Cardiac septum (tissue), 1 donor: ENCODE measurements at regions of chr14 and their contacts with region 1.

Region 1: DNA sequence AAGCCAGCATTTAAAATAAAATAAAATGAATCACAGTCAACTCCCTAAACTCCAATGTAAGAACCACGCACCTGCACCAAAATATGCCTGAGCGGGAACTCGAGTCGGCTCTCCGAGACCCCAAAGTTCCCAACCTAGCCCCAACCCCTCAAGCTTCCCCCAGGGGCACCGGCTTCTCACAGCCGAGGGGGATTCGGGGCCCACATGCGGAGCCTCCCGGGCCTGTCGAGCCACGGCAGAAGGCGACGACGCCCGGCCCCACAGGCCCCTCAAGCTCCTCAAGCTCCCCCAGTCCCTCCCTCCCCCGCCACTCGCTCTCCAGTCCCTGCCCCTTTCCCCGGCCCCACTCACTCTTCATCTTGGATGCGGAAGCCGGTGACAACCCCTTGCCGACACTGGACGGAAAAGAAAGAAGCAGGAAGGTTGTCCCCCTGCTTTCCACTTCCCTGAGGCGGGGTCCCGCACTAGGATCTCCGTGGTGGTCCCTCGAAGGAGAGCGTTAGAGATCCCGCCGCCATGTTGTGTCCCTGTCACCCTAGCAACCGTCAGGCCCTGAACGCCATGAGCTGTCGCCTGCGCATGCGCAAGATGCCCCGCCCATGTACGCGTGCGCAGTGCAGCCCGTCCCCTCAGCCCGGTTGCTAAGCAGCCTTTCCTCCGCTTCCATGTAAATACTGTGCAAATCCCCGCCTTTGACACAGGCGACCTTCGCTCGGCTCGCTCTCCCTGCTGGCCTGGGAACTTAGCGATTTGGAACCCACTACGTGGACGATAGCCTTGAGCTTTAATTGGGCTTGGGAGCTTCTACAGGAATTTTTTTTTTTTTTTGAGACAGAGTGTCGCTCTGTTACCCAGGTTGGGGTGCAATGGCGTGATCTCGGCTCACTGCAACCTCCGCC is at the start of gene MOK:
- DNase-seq: peak; percentile 98
- total RNA-seq, gene MOK: 9.5 TPM

Region 2: GRCh38 chr14:102139248-102140026 is 165.4 kb before region 1 on chr14 and contains the start of gene WDR20:
- intact Hi-C with region 1: loop called (anchors 5 kb)
- DNase-seq: peak; percentile 100
- total RNA-seq, gene WDR20: 21.9 TPM

Region 3: GRCh38 chr14:102235275-102235897 is 69.5 kb before region 1 on chr14:
- intact Hi-C with region 1: loop called (anchors 2 kb)
- DNase-seq: peak; percentile 90